ENCODE measurements at regions of chr18 and their contacts with region 1.

Region 1: GRCh38 chr18:11310476-11311086 is 161.2 kb upstream of the PIEZO2 start:
- DNase-seq: peak; percentile 42
- H3K27ac ChIP-seq: no peak overlapping the region
- CTCF ChIP-seq: peak; percentile 72

Region 2: DNA sequence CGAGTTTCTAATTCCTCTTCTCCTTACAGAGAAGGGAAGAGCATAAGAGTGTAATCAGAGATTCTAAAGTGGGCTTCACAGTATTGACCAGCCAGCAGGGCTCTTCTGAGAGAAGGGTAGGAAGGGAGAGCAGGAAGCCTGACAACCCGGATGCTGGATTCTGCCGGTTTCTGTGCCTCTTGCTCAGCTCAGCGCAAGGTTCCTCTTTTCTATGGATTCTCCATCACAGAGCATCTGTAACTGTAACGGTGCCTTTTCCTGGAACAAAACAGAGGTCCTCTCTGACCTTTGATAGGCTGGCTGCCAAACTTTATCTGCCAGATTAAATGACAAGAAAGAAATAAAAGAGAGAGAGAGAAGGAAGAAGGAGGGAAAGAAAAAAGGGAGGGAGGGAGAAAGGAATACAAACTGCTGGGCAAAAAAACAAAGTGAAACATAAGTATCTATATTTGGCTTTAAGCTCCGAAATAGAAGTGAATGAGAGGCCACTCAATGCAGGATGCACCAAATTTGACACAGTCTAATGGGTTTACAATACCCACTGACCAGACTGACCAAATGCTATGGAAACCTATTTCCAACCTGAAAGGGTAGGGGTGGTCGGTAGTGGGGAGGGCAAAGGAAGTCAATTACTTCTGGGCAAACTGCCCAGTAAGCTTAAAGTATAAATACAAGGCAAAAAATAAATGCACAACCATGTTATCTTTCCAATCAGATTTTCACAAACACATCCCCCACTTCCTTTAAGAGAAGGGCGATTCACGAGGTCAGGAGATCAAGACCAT is 220.5 kb before region 1 on chr18:
- CTCF ChIA-PET with region 1: no interaction called
- POLR2A ChIA-PET with region 1: no interaction called
- DNase-seq: no peak
- H3K27ac ChIP-seq: no peak overlapping the region
- CTCF ChIP-seq: no peak

Region 3: GRCh38 chr18:11407940-11408339 is 97.4 kb after region 1 on chr18:
- CTCF ChIA-PET with region 1: no interaction called
- POLR2A ChIA-PET with region 1: no interaction called
- DNase-seq: no peak
- H3K27ac ChIP-seq: no peak overlapping the region
- CTCF ChIP-seq: no peak

Region 4: GRCh38 chr18:11512096-11513030 is 201.8 kb after region 1 on chr18:
- CTCF ChIA-PET with region 1: interaction called, 24 read pairs
- POLR2A ChIA-PET with region 1: no interaction called
- DNase-seq: peak; percentile 36
- H3K27ac ChIP-seq: no peak overlapping the region
- CTCF ChIP-seq: no peak; the same call in 1 of the 2 replicates

Region 5: GRCh38 chr18:11518788-11519685 is 208.5 kb after region 1 on chr18:
- CTCF ChIA-PET with region 1: interaction called, 29 read pairs
- POLR2A ChIA-PET with region 1: no interaction called
- DNase-seq: peak; percentile 65
- H3K27ac ChIP-seq: no peak overlapping the region
- CTCF ChIP-seq: peak; percentile 61

Region 6: DNA sequence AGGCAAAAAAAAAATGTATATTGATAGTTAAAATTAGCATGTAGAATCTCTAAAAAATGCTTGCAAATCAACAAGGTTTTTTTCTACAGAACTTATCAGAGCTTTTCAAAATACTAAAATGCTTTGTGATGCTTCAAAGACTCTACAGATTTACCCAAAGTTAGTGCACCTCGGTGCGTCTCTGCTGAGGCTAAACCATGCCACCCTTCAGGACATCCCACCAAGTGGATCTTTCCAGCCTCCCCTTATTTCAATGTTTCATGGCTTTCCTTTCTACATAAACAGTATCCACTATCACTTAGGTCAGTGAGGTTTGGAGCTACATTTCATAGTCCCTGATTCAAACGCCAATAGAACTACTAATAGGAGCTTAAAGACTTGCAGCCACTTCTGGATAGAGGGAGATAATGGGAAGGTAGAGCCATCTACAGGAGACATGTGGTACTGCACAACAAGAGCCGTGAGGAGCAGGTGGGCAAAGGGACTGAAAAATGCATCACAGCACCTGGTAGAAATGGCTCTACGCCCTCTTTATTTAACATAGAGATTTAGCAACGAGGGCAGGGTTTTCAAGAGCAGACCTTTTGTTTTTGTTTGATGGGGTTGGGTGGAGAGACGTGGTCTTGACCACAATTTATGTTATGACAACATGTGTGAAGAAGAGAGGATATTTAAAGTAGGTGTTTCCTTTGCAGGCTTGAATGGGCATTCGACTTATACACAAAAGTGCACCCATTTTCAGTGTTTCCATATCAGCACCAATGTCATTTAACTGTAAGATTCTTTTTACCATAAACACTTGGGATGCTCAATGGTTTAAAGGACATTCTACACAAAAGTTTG is 242.7 kb after region 1 on chr18:
- CTCF ChIA-PET with region 1: interaction called, 13 read pairs
- POLR2A ChIA-PET with region 1: no interaction called
- DNase-seq: peak; percentile 64
- H3K27ac ChIP-seq: no peak overlapping the region
- CTCF ChIP-seq: peak; percentile 87